Heart right ventricle (tissue), 16 donors: ENCODE measurements at regions of chrX and their contacts with region 1.

Region 1: DNA sequence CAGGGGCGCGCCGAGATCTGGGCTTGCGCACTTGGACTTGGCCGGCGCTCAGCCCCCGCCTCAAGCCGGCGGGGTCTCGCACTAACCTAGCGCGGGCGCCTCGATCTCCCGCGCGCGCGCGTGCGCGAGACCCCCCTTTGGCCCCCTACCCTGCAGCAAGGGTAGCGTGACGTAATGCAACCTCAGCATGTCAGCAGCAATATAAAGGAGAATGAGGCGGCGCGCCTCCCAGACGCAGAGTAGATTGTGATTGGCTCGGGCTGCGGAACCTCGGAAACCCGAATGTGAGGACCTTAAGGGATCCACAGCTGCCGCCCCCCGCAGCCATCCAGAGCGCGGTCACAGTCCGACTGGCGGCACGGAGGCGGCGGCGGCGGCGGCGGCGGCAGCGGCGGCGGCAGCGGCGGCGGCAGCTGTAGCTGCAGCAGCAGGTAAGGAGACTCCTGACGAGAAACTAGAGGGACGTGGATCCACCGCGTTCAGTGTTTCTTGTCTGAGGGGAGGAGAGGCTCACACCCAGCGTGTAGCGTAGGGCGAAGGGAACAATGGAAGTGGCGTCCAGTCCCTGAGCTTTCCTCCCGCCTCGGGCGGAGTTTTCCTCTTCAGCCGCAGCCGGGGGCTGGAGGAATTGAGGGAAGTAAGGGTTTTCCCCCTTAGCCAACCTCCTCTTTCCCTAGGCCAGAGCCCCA is at the starts of genes SATL1 and ZNF711:
- DNase-seq: peak; percentile 8 to 20
- ATAC-seq: peak in 7 of 8 donors; percentile 39 to 79 (median 61)
- H3K4me3 ChIP-seq: peak within 1 kb of the TSS; percentile 21 to 63 (median 56)
- H3K27ac ChIP-seq: peak within 1 kb of the TSS in 3 of 10 donors; percentile 15 to 40 (median 19)
- H3K4me1 ChIP-seq: no peaks in the 10 kb centered on the region
- H3K27me3 ChIP-seq: peaks cover 0 to 26% (median 0%) of the 10 kb centered on the region in 7 donors
- CTCF ChIP-seq: no peak
- total RNA-seq, gene SATL1: 0.07 TPM in 1 of 10 donors, not detected in the others
- total RNA-seq, gene ZNF711: 0.40 to 2.7 (median 1.2) TPM

Region 2: DNA sequence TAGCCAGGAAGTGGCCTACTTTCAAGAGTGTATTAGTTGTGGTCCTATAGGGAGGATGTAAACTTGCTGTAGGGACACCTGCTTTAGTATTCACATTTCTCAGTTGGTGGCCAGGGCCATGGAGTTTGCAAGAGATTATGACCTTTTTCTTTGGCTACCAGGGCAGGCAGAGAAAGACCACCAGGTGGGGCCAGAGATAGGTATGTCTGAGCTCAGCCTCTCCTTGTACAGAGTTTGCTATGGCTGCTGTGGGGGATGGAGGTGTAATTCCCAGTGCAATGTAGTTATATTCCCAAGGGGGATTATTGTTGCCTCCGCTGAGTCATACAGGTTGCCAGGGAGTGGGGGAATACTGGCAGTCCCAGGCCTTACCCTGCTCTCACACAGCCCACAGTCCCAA is 878.0 kb after region 1 on chrX:
- intact Hi-C with region 1: loop called in 1 of 10 experiments (anchors 5 kb)
- DNase-seq: no peak
- ATAC-seq: no peak
- H3K4me3 ChIP-seq: no peak overlapping the region
- H3K27ac ChIP-seq: no peak overlapping the region
- H3K4me1 ChIP-seq: no peaks in the 10 kb centered on the region
- H3K27me3 ChIP-seq: no peaks in the 10 kb centered on the region
- CTCF ChIP-seq: no peak